HEK293 (cell line): ENCODE measurements at regions of chr1 and their contacts with region 1.

Region 1: GRCh38 chr1:47725992-47726855 is 271.0 kb downstream of the TRABD2B start:
- H3K4me3 ChIP-seq: peak overlapping the region; percentile 3; the same call in 1 of the 2 replicates
- H3K27ac ChIP-seq: no peak overlapping the region
- H3K4me1 ChIP-seq: 0 out of 2 replicates have a peak, but pooled peaks cover 5% of the 10 kb centered on the region
- CTCF ChIP-seq: peak; percentile 88

Region 2: GRCh38 chr1:47388891-47389238 is 337.4 kb before region 1 on chr1:
- CTCF ChIA-PET with region 1: interaction called, 94 read pairs
- POLR2A ChIA-PET with region 1: interaction called, 4 read pairs
- H3K4me3 ChIP-seq: no peak overlapping the region
- H3K27ac ChIP-seq: no peak overlapping the region
- H3K4me1 ChIP-seq: no peaks in the 10 kb centered on the region
- CTCF ChIP-seq: peak; percentile 79

Region 3: DNA sequence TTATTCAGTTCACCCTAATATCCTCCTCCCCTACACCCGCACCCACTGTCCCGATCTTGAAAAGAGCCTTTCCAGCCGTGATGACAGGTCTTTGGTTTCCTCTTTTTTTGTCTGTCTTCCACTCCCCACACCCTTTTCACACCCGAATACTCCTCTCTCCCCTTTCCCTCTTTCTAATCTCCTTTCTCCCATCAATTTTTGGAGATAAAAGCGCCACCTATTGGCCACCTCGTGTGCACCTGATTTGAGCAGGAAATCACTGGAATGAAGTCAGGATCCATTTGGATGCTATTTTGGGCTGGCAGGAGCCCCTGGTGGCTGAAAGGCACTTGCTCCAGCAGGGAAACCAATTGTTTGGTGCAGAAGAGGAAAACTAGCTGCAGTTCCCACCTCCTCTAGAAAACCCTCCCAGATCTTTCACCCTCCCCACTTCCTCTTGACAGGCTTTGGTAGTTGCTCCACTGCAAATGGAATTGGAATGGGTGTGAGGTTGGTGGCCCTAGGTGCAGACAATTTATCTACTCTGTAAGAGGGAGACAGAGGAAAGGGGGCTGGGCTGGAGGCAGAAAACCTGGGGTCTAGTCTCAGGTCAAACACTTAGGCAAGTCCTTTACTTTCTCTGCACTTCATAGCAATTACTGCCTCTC is 301.8 kb before region 1 on chr1:
- CTCF ChIA-PET with region 1: interaction called, 115 read pairs
- POLR2A ChIA-PET with region 1: no interaction called
- H3K4me3 ChIP-seq: no peak overlapping the region
- H3K27ac ChIP-seq: no peak overlapping the region
- H3K4me1 ChIP-seq: no peaks in the 10 kb centered on the region
- CTCF ChIP-seq: peak; percentile 95

Region 4: GRCh38 chr1:47449822-47450552 is 276.2 kb before region 1 on chr1:
- CTCF ChIA-PET with region 1: interaction called, 12 read pairs
- POLR2A ChIA-PET with region 1: no interaction called
- H3K4me3 ChIP-seq: no peak overlapping the region
- H3K27ac ChIP-seq: no peak overlapping the region
- H3K4me1 ChIP-seq: no peaks in the 10 kb centered on the region
- CTCF ChIP-seq: peak; percentile 19; the same call in 1 of the 2 replicates

Region 5: DNA sequence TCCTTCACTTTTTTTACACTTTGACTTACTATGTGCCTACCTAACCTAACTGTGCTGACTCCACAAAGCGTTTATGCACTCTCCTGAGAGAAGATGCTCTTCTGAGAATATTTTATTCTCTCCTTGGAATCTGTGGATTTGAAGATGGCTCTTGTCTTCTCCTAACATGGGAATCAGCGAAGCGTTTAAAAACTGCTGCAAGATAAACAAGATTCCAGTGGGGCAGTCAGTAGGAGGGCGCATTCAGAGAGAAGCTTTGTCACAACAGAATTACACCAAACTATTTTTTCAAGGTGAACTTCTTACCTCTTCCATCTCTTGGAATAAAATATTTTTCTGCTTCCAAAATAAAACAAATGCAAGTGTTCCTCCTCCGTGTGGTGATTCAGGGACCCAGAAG is 175.3 kb before region 1 on chr1:
- CTCF ChIA-PET with region 1: interaction called, 12 read pairs
- POLR2A ChIA-PET with region 1: no interaction called
- H3K4me3 ChIP-seq: no peak overlapping the region
- H3K27ac ChIP-seq: no peak overlapping the region
- H3K4me1 ChIP-seq: peaks cover 7% of the 10 kb centered on the region
- CTCF ChIP-seq: no peak

Region 6: DNA sequence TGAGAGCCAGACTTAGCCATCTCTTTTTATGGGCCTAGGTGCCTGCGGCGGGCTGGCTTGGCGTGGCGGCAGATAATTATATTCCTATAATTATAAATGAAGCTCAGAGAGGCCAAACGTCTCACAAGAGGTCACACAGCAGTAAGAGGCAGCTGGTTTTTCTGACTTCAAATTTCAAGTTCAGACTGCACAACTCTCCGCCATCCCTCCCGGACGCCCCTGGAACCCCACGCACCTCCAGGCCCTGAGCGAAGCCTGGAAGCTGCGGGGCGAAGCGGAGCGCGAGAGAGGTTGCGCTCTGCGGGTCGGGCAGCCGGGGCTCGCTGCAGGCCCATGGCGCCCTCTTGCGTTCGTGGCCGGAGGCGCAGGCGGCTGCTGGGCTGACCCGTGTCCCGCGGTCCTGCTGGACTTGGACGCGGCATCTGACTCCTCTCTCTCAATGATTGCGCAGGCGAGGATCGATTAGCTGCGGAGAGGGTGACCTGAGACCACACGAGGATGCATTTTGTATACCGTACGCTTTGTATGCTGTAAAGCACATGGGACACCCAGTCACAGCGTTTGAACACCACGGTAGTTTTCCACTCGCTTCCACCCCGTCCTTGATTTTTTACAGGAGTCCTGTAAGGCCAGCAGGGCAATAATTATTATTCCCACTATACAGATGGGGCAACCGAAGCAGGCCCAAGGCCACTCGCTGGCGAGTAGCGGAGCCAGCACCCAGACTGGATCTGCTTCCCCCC is 15.7 kb before region 1 on chr1:
- CTCF ChIA-PET with region 1: interaction called, 51 read pairs
- POLR2A ChIA-PET with region 1: no interaction called
- H3K4me3 ChIP-seq: no peak overlapping the region
- H3K27ac ChIP-seq: peak overlapping the region; percentile 77; the same call in 1 of the 2 replicates
- H3K4me1 ChIP-seq: peaks cover 6% of the 10 kb centered on the region; the same call in 1 of the 2 replicates
- CTCF ChIP-seq: peak; percentile 95

Region 7: DNA sequence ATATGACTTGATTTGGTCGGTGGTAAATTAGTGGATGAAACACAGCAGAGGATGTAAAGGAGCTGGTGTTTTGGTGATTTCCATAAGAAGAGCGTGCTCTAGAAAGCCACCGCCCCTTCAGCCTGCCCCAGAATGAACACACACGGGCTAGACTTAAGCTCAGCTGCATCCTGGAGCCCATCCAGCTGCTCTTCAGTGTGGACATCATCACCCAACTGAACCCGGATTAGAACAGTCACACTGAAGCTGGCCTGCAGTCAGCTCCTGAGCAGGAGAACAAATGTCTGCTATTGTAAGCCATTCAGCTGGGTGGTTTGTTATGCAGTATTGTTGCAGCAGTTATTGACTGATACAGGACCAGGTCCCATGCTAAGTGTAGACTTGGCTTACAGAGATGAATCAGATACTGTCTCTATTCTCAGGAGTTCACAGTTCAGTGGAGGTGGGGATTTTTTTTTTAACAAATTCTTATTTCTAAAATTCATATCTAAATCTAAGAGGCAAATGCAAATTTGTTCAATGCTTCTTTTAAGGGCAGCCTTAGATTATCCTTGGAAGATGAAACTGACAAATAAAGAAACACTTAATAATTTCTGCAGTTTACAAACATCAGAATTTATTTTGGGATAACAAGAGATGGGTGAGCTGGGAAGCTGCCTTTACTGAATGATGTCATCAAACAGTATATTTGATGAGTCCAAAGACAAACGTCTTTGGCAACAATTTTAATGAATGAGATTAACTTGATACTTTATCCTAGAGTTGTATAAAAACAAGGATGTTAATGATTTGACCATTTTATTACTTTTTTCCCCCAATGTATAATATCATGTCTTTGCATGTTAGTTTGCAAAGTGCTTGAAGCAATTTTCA is 19.7 kb after region 1 on chr1:
- CTCF ChIA-PET with region 1: interaction called, 11 read pairs
- POLR2A ChIA-PET with region 1: no interaction called
- H3K4me3 ChIP-seq: no peak overlapping the region
- H3K27ac ChIP-seq: no peak overlapping the region
- H3K4me1 ChIP-seq: no peaks in the 10 kb centered on the region
- CTCF ChIP-seq: no peak

Region 8: GRCh38 chr1:47761974-47762373 is 35.8 kb after region 1 on chr1:
- CTCF ChIA-PET with region 1: no interaction called
- POLR2A ChIA-PET with region 1: no interaction called
- H3K4me3 ChIP-seq: no peak overlapping the region
- H3K27ac ChIP-seq: no peak overlapping the region
- H3K4me1 ChIP-seq: no peaks in the 10 kb centered on the region
- CTCF ChIP-seq: no peak

Region 9: GRCh38 chr1:47840393-47841190 is 114.4 kb after region 1 on chr1:
- CTCF ChIA-PET with region 1: no interaction called
- POLR2A ChIA-PET with region 1: no interaction called
- H3K4me3 ChIP-seq: no peak overlapping the region
- H3K27ac ChIP-seq: no peak overlapping the region
- H3K4me1 ChIP-seq: no peaks in the 10 kb centered on the region
- CTCF ChIP-seq: no peak

Region 10: DNA sequence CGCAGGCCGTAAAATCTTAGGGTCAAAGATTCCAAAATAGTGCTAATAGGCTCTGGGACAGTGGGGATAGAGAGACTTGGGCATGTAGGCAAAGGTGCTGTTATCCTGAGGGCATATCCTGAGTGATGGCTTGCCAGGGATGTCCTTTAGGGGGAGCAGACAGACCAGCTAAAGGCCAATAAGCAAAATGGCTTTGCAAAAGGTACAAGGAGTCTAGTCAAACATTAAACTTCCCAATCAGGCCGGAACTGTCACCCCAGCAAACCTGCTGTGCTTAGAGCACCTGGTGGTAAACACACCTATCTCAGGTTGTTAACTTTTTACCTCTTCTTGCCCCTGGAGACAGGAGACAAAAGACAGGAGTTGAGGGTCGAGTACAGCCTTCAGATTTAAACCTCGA is 221.9 kb after region 1 on chr1:
- CTCF ChIA-PET with region 1: no interaction called
- POLR2A ChIA-PET with region 1: no interaction called
- H3K4me3 ChIP-seq: no peak overlapping the region
- H3K27ac ChIP-seq: no peak overlapping the region
- H3K4me1 ChIP-seq: no peaks in the 10 kb centered on the region
- CTCF ChIP-seq: no peak